Testis (tissue), 5 donors: ENCODE measurements at regions of chr6 and their contacts with region 1.

Region 1: DNA sequence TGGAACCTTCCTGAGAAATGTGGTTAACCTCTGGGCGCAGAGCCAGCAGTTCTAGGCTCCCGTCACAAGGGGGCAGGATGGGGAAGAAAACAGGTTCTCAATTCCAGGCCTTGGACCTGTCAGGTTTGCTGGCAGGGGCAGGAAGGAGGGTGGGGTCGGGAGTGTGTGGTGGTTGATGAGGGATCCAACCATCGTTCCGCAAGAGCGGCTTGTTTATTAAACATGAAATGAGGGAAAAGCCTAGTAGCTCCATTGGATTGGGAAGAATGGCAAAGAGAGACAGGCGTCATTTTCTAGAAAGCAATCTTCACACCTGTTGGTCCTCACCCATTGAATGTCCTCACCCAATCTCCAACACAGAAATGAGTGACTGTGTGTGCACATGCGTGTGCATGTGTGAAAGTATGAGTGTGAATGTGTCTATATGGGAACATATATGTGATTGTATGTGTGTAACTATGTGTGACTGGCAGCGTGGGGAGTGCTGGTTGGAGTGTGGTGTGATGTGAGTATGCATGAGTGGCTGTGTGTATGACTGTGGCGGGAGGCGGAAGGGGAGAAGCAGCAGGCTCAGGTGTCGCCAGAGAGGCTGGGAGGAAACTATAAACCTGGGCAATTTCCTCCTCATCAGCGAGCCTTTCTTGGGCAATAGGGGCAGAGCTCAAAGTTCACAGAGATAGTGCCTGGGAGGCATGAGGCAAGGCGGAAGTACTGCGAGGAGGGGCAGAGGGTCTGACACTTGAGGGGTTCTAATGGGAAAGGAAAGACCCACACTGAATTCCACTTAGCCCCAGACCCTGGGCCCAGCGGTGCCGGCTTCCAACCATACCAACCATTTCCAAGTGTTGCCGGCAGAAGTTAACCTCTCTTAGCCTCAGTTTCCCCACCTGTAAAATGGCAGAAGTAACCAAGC is 29.6 kb downstream of the SRSF3 start:
- DNase-seq: peak; percentile 92
- H3K4me3 ChIP-seq: no peak overlapping the region
- H3K27ac ChIP-seq: peak overlapping the region in 1 of 2 donors; percentile 44
- H3K4me1 ChIP-seq: peaks cover 23% of the 10 kb centered on the region
- H3K27me3 ChIP-seq: no peaks in the 10 kb centered on the region
- CTCF ChIP-seq: peak; percentile 82 to 89 (median 86)
- POLR2A ChIP-seq: no peak

Region 2: DNA sequence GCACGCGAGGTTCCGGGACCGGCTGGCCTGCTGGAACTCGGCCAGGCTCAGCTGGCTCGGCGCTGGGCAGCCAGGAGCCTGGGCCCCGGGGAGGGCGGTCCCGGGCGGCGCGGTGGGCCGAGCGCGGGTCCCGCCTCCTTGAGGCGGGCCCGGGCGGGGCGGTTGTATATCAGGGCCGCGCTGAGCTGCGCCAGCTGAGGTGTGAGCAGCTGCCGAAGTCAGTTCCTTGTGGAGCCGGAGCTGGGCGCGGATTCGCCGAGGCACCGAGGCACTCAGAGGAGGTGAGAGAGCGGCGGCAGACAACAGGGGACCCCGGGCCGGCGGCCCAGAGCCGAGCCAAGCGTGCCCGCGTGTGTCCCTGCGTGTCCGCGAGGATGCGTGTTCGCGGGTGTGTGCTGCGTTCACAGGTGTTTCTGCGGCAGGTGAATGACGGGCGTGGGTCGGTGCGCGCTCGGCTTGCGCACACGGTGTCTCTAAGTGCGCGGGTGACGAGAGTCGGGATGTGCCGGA is 54.8 kb after region 1 on chr6 and contains the start of gene CDKN1A:
- intact Hi-C with region 1: loop called (anchors 2 kb)
- DNase-seq: peak; percentile 95
- H3K4me3 ChIP-seq: peak within 1 kb of the TSS; percentile 88 to 94
- H3K27ac ChIP-seq: peak within 1 kb of the TSS; percentile 98 to 99
- H3K4me1 ChIP-seq: peaks cover 42% of the 10 kb centered on the region
- H3K27me3 ChIP-seq: no peaks in the 10 kb centered on the region
- CTCF ChIP-seq: peak; percentile 9 to 42 (median 28)
- POLR2A ChIP-seq: peak; percentile 94
- total RNA-seq, gene CDKN1A: 154 TPM

Region 3: DNA sequence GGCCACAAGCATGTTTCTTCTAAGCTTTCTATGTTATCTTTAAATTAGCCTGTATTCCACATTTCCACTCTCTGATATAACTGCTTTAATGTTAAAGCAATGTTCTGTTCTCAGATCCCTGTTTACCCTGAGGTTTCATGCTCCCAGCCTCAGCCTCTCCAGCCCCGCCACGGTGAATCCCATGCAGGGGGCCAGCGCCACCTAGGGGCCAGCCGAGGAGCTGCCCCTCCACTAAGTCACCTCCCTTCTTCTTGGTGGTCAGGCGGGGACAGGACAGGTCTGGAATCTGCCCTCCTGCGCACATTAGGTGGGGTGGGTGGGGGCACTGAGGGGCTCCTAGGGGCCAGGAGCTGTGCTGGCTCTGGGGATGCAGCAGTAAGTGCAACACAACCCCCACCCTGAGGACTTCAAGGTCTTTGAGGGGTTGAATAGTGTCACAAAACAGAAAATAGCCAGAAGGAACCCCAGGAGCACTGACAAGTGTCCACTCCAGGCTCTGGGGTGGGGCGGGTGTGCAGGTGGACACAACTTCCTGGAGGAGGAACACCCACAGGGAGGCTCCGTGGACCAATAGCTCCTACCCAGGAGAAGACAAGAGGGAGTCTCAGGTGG is 135.5 kb after region 1 on chr6:
- intact Hi-C with region 1: loop called (anchors 10 kb)
- DNase-seq: peak; percentile 86
- H3K4me3 ChIP-seq: peak overlapping the region in 1 of 2 donors; percentile 1
- H3K27ac ChIP-seq: no peak overlapping the region
- H3K4me1 ChIP-seq: no peaks in the 10 kb centered on the region
- H3K27me3 ChIP-seq: no peaks in the 10 kb centered on the region
- CTCF ChIP-seq: peak; percentile 76 to 99 (median 93)
- POLR2A ChIP-seq: no peak